CD8-positive, alpha-beta T cell (primary cell): ENCODE measurements at regions of chr14 and their contacts with region 1.

Region 1: GRCh38 chr14:97978341-97978740 is 1181.2 kb downstream of the VRK1 start:
- DNase-seq: peak; percentile 46 to 88 (median 80)
- ATAC-seq: peak; percentile 76
- H3K4me3 ChIP-seq: peak overlapping the region; percentile 66 to 75
- H3K4me3 Mint-ChIP-seq: peak overlapping the region; percentile 82
- H3K27ac ChIP-seq: peak overlapping the region; percentile 73 to 77
- H3K27ac Mint-ChIP-seq: peak overlapping the region; percentile 88
- H3K4me1 ChIP-seq: peaks cover 37% of the 10 kb centered on the region
- H3K4me1 Mint-ChIP-seq: peaks cover 62% of the 10 kb centered on the region
- H3K27me3 ChIP-seq: no peaks in the 10 kb centered on the region
- H3K27me3 Mint-ChIP-seq: no peaks in the 10 kb centered on the region
- CTCF ChIP-seq: peak; percentile 53

Region 2: GRCh38 chr14:97538749-97539410 is 439.5 kb before region 1 on chr14:
- CTCF ChIA-PET with region 1: no interaction called
- POLR2A ChIA-PET with region 1: no interaction called
- intact Hi-C with region 1: no loop called
- DNase-seq: peak in 1 of 9 experiments; percentile 29
- ATAC-seq: no peak
- H3K4me3 ChIP-seq: no peak overlapping the region
- H3K4me3 Mint-ChIP-seq: no peak overlapping the region
- H3K27ac ChIP-seq: no peak overlapping the region
- H3K27ac Mint-ChIP-seq: no peak overlapping the region
- H3K4me1 ChIP-seq: no peaks in the 10 kb centered on the region
- H3K4me1 Mint-ChIP-seq: peaks cover 10% of the 10 kb centered on the region
- H3K27me3 ChIP-seq: no peaks in the 10 kb centered on the region
- H3K27me3 Mint-ChIP-seq: no peaks in the 10 kb centered on the region
- CTCF ChIP-seq: no peak

Region 3: GRCh38 chr14:97602438-97603117 is 375.8 kb before region 1 on chr14:
- CTCF ChIA-PET with region 1: interaction called, 3 read pairs
- POLR2A ChIA-PET with region 1: interaction called, 7 read pairs
- intact Hi-C with region 1: loop called in 1 of 2 experiments (anchors 10 kb)
- DNase-seq: peak; percentile 61 to 91 (median 80)
- ATAC-seq: peak; percentile 90
- H3K4me3 ChIP-seq: peak overlapping the region; percentile 19 to 21
- H3K4me3 Mint-ChIP-seq: no peak overlapping the region
- H3K27ac ChIP-seq: peak overlapping the region; percentile 66 to 84
- H3K27ac Mint-ChIP-seq: no peak overlapping the region
- H3K4me1 ChIP-seq: peaks cover 45% of the 10 kb centered on the region
- H3K4me1 Mint-ChIP-seq: peaks cover 38% of the 10 kb centered on the region
- H3K27me3 ChIP-seq: no peaks in the 10 kb centered on the region
- H3K27me3 Mint-ChIP-seq: no peaks in the 10 kb centered on the region
- CTCF ChIP-seq: no peak

Region 4: GRCh38 chr14:97994020-97994531 is 15.7 kb after region 1 on chr14:
- CTCF ChIA-PET with region 1: interaction called, 18 read pairs
- POLR2A ChIA-PET with region 1: interaction called, 19 read pairs
- intact Hi-C with region 1: loop called (anchors 1 kb)
- DNase-seq: peak in 7 of 9 experiments; percentile 7 to 79 (median 58)
- ATAC-seq: peak; percentile 81
- H3K4me3 ChIP-seq: no peak overlapping the region
- H3K4me3 Mint-ChIP-seq: peak overlapping the region; percentile 9
- H3K27ac ChIP-seq: peak overlapping the region; percentile 62 to 83
- H3K27ac Mint-ChIP-seq: peak overlapping the region; percentile 98
- H3K4me1 ChIP-seq: peaks cover 66% of the 10 kb centered on the region
- H3K4me1 Mint-ChIP-seq: peaks cover 84% of the 10 kb centered on the region
- H3K27me3 ChIP-seq: no peaks in the 10 kb centered on the region
- H3K27me3 Mint-ChIP-seq: no peaks in the 10 kb centered on the region
- CTCF ChIP-seq: no peak

Region 5: DNA sequence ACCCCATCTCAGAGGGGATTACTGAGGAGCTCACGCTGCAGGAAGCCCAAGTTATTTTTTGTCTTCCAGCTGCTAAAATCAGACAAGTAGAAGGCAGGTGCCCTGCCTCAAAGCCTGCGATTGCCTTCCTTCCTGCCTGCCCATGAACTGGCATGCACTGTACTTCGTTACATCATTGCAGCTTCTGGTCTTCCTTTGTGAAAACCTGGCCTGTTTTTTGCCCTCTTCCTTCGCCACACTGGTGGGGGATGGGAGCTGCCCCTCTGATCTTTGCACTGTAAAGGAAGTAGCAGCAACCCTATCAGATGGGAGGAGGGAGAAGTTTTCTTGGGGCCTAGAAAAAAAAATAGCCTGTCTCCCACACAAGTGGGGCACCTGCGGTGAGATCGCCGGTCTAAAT is 195.0 kb after region 1 on chr14:
- CTCF ChIA-PET with region 1: interaction called, 8 read pairs
- POLR2A ChIA-PET with region 1: interaction called, 11 read pairs
- intact Hi-C with region 1: no loop called
- DNase-seq: peak; percentile 39 to 91 (median 77)
- ATAC-seq: peak; percentile 60
- H3K4me3 ChIP-seq: peak overlapping the region; percentile 18 to 28
- H3K4me3 Mint-ChIP-seq: peak overlapping the region; percentile 76
- H3K27ac ChIP-seq: peak overlapping the region; percentile 49 to 76
- H3K27ac Mint-ChIP-seq: peak overlapping the region; percentile 96
- H3K4me1 ChIP-seq: peaks cover 100% of the 10 kb centered on the region
- H3K4me1 Mint-ChIP-seq: peaks cover 99% of the 10 kb centered on the region
- H3K27me3 ChIP-seq: no peaks in the 10 kb centered on the region
- H3K27me3 Mint-ChIP-seq: no peaks in the 10 kb centered on the region
- CTCF ChIP-seq: no peak

Region 6: DNA sequence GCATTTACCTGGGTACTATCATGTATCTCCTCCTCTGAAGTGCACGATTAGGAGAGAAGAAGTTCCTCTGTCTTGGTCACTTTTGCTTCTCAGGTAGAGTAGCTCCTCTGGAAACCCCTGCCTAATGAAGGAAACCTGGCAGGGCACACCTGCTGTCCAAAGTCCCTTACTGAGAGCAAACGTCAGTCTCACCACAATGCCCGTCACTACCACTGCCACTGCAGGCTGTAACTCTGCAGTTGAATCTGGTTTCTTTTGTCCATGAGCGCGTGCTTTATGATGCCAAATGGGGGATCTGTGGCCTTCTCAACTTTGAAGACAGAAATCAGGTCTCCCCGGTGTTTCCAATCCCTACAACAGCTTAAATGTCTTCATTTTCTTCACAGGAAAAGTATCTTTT is 225.1 kb after region 1 on chr14:
- CTCF ChIA-PET with region 1: no interaction called
- POLR2A ChIA-PET with region 1: no interaction called
- intact Hi-C with region 1: no loop called
- DNase-seq: peak in 2 of 9 experiments; percentile 38 to 62
- ATAC-seq: peak; percentile 43
- H3K4me3 ChIP-seq: no peak overlapping the region
- H3K4me3 Mint-ChIP-seq: peak overlapping the region; percentile 79
- H3K27ac ChIP-seq: peak overlapping the region in 1 of 2 experiments; percentile 33
- H3K27ac Mint-ChIP-seq: peak overlapping the region; percentile 91
- H3K4me1 ChIP-seq: peaks cover 51% of the 10 kb centered on the region
- H3K4me1 Mint-ChIP-seq: peaks cover 96% of the 10 kb centered on the region
- H3K27me3 ChIP-seq: no peaks in the 10 kb centered on the region
- H3K27me3 Mint-ChIP-seq: no peaks in the 10 kb centered on the region
- CTCF ChIP-seq: no peak

Region 7: GRCh38 chr14:99177886-99178835 is 1199.8 kb after region 1 on chr14:
- CTCF ChIA-PET with region 1: no interaction called
- POLR2A ChIA-PET with region 1: no interaction called
- intact Hi-C with region 1: loop called in 1 of 2 experiments (anchors 5 kb)
- DNase-seq: peak in 1 of 9 experiments; percentile 47
- ATAC-seq: no peak
- H3K4me3 ChIP-seq: no peak overlapping the region
- H3K4me3 Mint-ChIP-seq: peak overlapping the region; percentile 69
- H3K27ac ChIP-seq: peak overlapping the region; percentile 18 to 55
- H3K27ac Mint-ChIP-seq: peak overlapping the region; percentile 92
- H3K4me1 ChIP-seq: peaks cover 62% of the 10 kb centered on the region
- H3K4me1 Mint-ChIP-seq: peaks cover 61% of the 10 kb centered on the region
- H3K27me3 ChIP-seq: no peaks in the 10 kb centered on the region
- H3K27me3 Mint-ChIP-seq: no peaks in the 10 kb centered on the region
- CTCF ChIP-seq: no peak

Region 8: GRCh38 chr14:99266181-99267178 is 1288.1 kb after region 1 on chr14:
- CTCF ChIA-PET with region 1: interaction called, 12 read pairs
- POLR2A ChIA-PET with region 1: interaction called, 12 read pairs
- intact Hi-C with region 1: no loop called
- DNase-seq: peak; percentile 85 to 93 (median 91)
- ATAC-seq: peak; percentile 24
- H3K4me3 ChIP-seq: peak overlapping the region; percentile 87 to 88
- H3K4me3 Mint-ChIP-seq: peak overlapping the region; percentile 100
- H3K27ac ChIP-seq: peak overlapping the region; percentile 96 to 97
- H3K27ac Mint-ChIP-seq: peak overlapping the region; percentile 100
- H3K4me1 ChIP-seq: peaks cover 40% of the 10 kb centered on the region
- H3K4me1 Mint-ChIP-seq: peaks cover 64% of the 10 kb centered on the region
- H3K27me3 ChIP-seq: no peaks in the 10 kb centered on the region
- H3K27me3 Mint-ChIP-seq: no peaks in the 10 kb centered on the region
- CTCF ChIP-seq: peak; percentile 99

Region 9: DNA sequence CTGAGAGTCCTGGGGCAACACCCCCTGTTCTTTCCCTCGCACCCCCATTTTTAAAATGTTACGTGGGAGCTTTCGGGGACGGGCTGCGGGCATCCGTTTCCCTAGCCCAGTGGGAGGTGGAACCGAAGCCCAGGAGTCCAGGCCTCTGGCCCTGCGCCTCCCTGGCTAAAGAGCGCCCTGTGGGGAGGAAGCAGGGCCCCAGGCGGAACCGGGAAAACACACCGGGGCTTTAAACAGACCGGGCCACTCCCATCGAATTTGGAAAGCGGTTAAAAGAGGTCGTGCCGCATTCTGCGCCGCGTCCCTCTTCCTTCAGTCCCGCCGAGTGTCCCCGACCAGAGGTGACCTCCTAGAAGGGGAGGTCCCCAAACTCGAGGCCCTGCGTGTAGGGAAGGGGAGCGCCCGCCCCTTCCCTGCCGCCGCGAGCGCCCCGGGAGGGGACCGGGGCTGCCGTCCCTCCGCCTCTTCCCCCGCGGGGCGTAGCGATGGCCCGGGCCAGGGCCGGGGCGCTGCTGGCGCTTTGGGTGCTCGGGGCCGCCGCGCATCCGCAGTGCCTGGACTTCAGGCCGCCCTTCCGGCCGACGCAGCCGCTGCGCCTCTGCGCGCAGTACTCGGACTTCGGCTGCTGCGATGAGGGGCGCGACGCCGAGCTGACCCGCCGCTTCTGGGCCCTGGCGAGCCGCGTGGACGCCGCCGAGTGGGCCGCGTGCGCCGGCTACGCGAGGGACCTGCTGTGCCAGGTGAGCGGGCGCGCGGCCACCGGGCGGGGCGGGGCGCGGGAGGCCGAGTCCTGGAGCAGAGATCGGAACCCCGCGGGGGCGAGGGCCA is 1666.6 kb after region 1 on chr14 and contains the start of gene HHIPL1:
- CTCF ChIA-PET with region 1: no interaction called
- POLR2A ChIA-PET with region 1: no interaction called
- intact Hi-C with region 1: no loop called
- DNase-seq: no peak
- ATAC-seq: no peak
- H3K4me3 ChIP-seq: no peak within 1 kb of the TSS
- H3K4me3 Mint-ChIP-seq: no peak within 1 kb of the TSS
- H3K27ac ChIP-seq: no peak within 1 kb of the TSS
- H3K27ac Mint-ChIP-seq: no peak within 1 kb of the TSS
- H3K4me1 ChIP-seq: peaks cover 4% of the 10 kb centered on the region
- H3K4me1 Mint-ChIP-seq: peaks cover 4% of the 10 kb centered on the region
- H3K27me3 ChIP-seq: peaks cover 15 to 17% of the 10 kb centered on the region in 2 experiments
- H3K27me3 Mint-ChIP-seq: peaks cover 38% of the 10 kb centered on the region
- CTCF ChIP-seq: no peak
- total RNA-seq, gene HHIPL1: 0.11 TPM in 1 of 2 experiments, not detected in the other